ENCODE measurements at regions of chr19 and their contacts with region 1.

Region 1: GRCh38 chr19:46069841-46070341 is 29.1 kb upstream of the IGFL4 start:
- DNase-seq: no peak
- H3K4me3 ChIP-seq: no peak overlapping the region
- H3K27ac ChIP-seq: no peak overlapping the region
- H3K4me1 ChIP-seq: no peaks in the 10 kb centered on the region
- H3K27me3 ChIP-seq: peaks cover 12% of the 10 kb centered on the region
- CTCF ChIP-seq: no peak
- EP300 ChIP-seq: no peak
- POLR2A ChIP-seq: no peak

Region 2: DNA sequence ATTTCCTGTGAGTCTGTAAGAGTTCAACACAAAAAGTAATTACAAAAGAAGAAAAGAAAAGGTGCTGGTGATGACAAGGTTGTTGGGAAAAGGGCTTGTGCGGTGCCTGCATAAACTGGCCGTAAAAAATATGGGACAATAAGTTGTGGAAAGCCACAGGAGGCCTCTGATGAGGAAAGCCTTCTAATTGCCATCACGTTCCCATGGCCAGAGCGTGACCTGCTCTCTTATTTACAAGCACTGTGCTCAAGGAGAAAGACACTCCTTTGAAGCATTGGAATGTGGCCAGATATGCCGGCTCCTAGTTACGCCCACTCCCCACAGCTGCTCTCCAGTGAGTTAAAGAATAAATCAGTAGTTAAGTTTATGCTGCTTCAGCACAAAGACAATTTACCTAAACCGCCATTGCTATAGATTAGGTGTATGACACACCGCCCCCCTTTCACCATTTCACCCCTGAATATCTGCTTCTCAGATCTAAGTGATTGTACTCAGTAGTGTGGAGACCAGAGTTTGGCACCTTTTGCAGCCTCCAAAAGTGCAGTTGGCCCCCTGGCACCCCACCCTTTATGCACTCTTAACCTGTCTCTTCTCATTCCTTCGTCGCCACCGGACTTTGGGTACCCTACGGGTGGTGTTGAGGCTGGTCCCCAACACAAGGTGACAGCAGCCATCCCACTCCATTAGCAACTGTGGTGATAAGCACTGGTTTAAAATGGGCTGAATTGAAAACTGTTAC is 38.9 kb before region 1 on chr19:
- in situ Hi-C with region 1: no loop called
- intact Hi-C with region 1: loop called (anchors 5 kb)
- DNase-seq: no peak
- H3K4me3 ChIP-seq: no peak overlapping the region
- H3K27ac ChIP-seq: no peak overlapping the region
- H3K4me1 ChIP-seq: no peaks in the 10 kb centered on the region
- H3K27me3 ChIP-seq: peaks cover 18% of the 10 kb centered on the region
- CTCF ChIP-seq: no peak
- EP300 ChIP-seq: no peak
- POLR2A ChIP-seq: no peak

Measured in transverse colon (tissue), 4 donors.